Endothelial cell of umbilical vein (primary cell): ENCODE measurements at regions of chr18 and their contacts with region 1.

Region 1: DNA sequence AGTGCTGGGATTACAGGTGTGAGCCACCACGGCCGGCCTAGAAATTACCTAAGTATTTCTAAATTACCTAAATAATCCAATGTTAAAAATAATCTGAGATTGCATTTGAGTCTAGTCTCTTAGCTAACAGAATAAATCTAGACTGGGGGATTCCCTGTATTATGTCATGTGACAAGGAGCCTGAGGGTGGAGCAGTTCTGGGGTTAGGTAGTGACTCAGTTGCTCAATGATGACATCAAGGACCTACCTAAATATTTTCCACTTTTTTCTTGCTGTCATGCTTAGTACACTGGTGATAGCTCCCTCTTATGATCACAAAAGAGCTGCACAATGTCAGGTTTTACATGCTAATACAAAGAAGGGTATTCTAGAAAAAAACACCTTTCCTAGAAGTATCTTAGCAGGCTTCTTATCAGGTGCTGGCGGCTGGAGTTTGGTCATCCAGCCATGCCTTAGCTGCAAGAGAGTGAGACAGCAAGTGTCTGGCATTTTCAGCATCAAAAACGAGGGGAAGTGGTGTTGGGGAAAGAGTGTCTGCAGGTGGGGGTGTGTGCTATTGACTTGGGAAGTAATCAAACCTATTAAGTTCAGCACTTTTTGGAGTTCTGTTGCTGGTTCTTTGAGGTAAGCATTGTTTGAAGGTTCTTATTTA is 17.5 kb upstream of the CEP192 start:
- DNase-seq: no peak
- H3K4me3 ChIP-seq: no peak overlapping the region
- H3K27ac ChIP-seq: no peak overlapping the region
- H3K4me1 ChIP-seq: no peaks in the 10 kb centered on the region
- H3K27me3 ChIP-seq: no peaks in the 10 kb centered on the region
- CTCF ChIP-seq: no peak
- POLR2A ChIP-seq: no peak

Region 2: DNA sequence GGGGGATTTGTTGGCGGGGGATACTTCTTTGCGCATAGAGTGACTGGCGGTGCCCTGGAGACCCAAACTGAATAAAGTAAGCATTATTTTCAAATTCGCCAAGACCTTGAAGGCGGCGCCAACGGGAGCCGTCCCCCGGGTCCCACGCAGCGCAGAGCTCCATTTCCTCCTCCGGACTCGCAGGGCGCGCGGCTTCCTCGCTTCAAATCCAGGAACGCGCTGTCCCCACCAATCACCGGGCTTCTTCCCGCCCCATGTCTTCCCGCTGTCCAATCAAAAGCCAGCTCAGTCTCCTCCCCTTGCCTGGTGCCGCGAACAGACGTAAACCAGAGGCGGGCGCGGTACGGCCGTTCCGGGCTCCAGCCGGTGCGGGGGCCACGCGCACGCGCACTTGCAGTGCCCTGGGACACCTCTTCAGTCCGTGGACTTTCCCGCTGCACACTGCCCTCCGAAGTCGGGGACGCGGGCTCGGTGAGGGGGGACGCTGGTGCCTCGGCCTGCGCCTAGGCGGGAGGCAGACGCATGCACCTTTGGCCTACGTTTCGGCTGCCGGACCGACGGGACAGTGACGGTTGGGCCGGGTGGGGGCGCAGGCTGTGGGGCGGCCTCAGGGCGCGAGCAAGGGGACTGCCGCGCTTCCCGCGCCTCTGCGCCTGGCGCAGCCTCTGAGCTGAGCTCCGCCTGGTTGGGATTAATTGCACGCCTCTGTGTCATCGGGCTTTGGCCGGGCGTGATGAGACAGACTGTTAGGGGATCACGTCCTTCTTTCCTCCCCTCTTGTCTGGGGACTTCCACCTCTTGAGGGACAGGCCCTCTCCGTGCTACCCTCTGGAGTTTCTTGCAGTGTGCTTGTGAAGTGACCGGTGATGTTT is 17.5 kb after region 1 on chr18 and contains the start of gene CEP192:
- CTCF ChIA-PET with region 1: interaction called, 12 read pairs
- POLR2A ChIA-PET with region 1: interaction called, 3 read pairs
- dilution Hi-C with region 1: no loop called
- intact Hi-C with region 1: no loop called
- DNase-seq: peak; percentile 99
- H3K4me3 ChIP-seq: peak within 1 kb of the TSS; percentile 72 to 97 (median 90)
- H3K27ac ChIP-seq: peak within 1 kb of the TSS; percentile 62
- H3K4me1 ChIP-seq: peaks cover 20% of the 10 kb centered on the region
- H3K27me3 ChIP-seq: no peaks in the 10 kb centered on the region
- CTCF ChIP-seq: peak in 1 of 2 donors; percentile 13
- POLR2A ChIP-seq: peak; percentile 94
- total RNA-seq, gene CEP192: 22.7 and 22.9 TPM in 2 replicates